Naive thymus-derived CD4-positive, alpha-beta T cell (primary cell): ENCODE measurements at regions of chr1 and their contacts with region 1.

Region 1: DNA sequence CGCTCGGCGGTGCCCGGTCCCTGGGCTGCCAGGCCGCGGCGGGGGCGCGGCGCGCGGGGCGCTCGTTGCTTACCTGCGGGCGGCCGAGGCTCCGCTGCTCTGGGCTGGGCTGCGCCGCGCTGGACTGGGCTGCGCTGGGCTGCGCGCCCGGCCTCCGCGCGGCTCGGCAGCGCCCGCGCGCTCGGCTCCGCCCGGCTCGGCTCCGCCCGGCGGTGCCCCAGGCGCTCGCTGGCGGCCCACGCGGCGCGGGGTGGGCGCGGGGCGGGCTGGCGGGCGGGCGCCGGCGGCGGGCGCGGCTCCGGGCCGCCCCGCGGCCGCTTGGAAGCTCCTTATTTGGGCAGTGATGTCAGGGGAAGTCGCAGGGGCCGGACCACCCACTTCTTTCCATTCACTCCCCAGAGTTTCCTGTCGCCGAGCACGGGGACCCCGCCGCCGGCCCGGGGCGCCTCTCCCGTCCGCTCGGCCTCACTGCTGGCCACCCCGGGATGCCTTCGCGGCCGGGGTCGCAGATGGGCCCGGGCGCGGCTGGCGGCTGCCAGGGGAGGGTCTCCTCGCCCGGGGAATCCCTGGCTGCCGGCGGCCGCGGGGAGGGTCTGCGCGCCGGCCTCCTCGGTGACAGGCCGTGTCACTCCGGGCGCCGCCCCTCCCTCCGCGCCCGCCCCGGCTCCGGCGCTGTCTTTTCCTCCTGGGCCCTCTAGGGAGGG is 177.7 kb upstream of the EDN2 start:
- DNase-seq: peak; percentile 47 to 82 (median 60)
- ATAC-seq: peak; percentile 88
- H3K4me3 ChIP-seq: peak overlapping the region; percentile 60
- H3K4me3 Mint-ChIP-seq: peak overlapping the region in 6 of 10 donors; percentile 13 to 93 (median 70)
- H3K27ac ChIP-seq: peak overlapping the region; percentile 61
- H3K27ac Mint-ChIP-seq: peak overlapping the region in 2 of 9 donors; percentile 56 to 84
- H3K4me1 ChIP-seq: peaks cover 25 to 51% of the 10 kb centered on the region in 2 donors
- H3K4me1 Mint-ChIP-seq: peaks cover 42 to 80% (median 66%) of the 10 kb centered on the region in 7 donors
- H3K27me3 ChIP-seq: no peaks in the 10 kb centered on the region
- H3K27me3 Mint-ChIP-seq: no peaks in the 10 kb centered on the region

Region 2: DNA sequence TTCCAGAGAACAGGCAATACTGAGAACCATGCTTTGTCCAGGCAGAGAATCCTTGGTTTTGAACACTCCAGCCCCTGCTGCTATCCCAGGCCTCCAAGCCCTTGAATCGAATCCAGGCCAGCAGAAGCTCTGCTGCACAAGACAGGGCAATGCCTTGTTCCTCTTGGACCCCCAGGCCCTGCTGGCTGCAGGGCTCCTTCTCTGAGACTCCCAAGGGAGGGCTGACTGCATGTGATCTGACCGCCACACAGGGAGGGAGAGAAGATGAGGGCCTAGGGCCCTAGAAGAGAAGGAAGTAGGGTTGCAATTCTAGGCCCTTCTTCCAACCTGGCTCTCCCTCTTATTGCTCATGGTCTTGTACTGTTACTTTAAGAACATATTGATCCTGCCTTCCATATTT is 17.2 kb before region 1 on chr1:
- CTCF ChIA-PET with region 1: no interaction called
- POLR2A ChIA-PET with region 1: no interaction called
- intact Hi-C with region 1: no loop called
- DNase-seq: no peak
- ATAC-seq: no peak
- H3K4me3 ChIP-seq: no peak overlapping the region
- H3K4me3 Mint-ChIP-seq: no peak overlapping the region
- H3K27ac ChIP-seq: no peak overlapping the region
- H3K27ac Mint-ChIP-seq: no peak overlapping the region
- H3K4me1 ChIP-seq: peaks cover 0 to 5% of the 10 kb centered on the region in 2 donors
- H3K4me1 Mint-ChIP-seq: peaks cover 8 to 36% (median 15%) of the 10 kb centered on the region in 7 donors
- H3K27me3 ChIP-seq: no peaks in the 10 kb centered on the region
- H3K27me3 Mint-ChIP-seq: no peaks in the 10 kb centered on the region

Region 3: DNA sequence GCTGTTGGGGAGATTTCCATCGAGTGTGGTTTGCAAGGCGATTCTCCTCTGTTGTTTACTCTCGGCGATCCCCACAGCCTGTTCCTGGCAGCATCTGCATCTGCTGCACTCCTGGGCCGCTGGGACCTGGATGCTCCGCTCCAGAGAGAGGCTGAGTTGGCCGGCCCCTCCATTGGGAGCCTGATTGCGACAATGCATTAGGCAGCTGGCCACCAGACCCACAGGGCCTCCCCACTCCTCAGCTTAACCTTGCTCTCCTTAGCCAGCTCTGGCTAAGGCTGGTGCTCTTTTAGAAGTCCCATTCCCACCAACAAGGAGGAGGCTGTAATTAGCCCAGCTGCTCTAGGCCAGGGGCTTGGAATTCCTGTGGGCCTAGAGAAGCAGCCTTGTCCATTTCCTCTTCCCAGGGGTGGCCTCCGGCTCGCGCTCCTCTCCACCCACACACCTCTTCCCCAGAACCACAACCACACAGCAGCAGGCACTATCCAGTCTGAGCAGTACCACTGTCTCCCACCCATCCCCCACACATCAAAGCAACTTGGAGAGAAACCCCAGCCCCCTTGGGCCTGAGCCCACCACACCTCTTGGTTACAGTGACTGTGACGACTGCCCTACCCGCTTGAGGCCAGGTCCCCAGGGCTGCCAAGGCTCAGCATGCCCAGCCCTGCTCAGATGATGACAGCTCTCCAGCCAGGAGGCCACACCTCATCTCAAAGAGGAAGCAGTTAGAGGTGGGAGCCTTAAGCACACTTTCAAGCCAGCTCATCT is 16.1 kb after region 1 on chr1:
- CTCF ChIA-PET with region 1: interaction called, 3 read pairs
- POLR2A ChIA-PET with region 1: interaction called, 20 read pairs
- intact Hi-C with region 1: loop called in 1 of 2 experiments (anchors 1 kb)
- DNase-seq: no peak
- ATAC-seq: peak; percentile 46
- H3K4me3 ChIP-seq: no peak overlapping the region
- H3K4me3 Mint-ChIP-seq: peak overlapping the region in 2 of 10 donors; percentile 43 to 76
- H3K27ac ChIP-seq: no peak overlapping the region
- H3K27ac Mint-ChIP-seq: peak overlapping the region in 1 of 9 donors; percentile 90
- H3K4me1 ChIP-seq: peaks cover 40 to 49% of the 10 kb centered on the region in 2 donors
- H3K4me1 Mint-ChIP-seq: peaks cover 30 to 92% (median 58%) of the 10 kb centered on the region in 7 donors
- H3K27me3 ChIP-seq: no peaks in the 10 kb centered on the region
- H3K27me3 Mint-ChIP-seq: no peaks in the 10 kb centered on the region

Region 4: GRCh38 chr1:41683681-41684500 is 21.7 kb after region 1 on chr1:
- CTCF ChIA-PET with region 1: no interaction called
- POLR2A ChIA-PET with region 1: no interaction called
- intact Hi-C with region 1: loop called in 1 of 2 experiments (anchors 2 kb)
- DNase-seq: peak in 1 of 9 donors; percentile 46
- ATAC-seq: peak; percentile 65
- H3K4me3 ChIP-seq: no peak overlapping the region
- H3K4me3 Mint-ChIP-seq: peak overlapping the region in 8 of 10 donors; percentile 9 to 70 (median 24)
- H3K27ac ChIP-seq: no peak overlapping the region
- H3K27ac Mint-ChIP-seq: peak overlapping the region in 2 of 9 donors; percentile 44 to 83
- H3K4me1 ChIP-seq: peaks cover 25 to 53% of the 10 kb centered on the region in 2 donors
- H3K4me1 Mint-ChIP-seq: peaks cover 28 to 95% (median 43%) of the 10 kb centered on the region in 7 donors
- H3K27me3 ChIP-seq: no peaks in the 10 kb centered on the region
- H3K27me3 Mint-ChIP-seq: no peaks in the 10 kb centered on the region

Region 5: GRCh38 chr1:41739061-41739955 is 77.1 kb after region 1 on chr1:
- CTCF ChIA-PET with region 1: no interaction called
- POLR2A ChIA-PET with region 1: no interaction called
- intact Hi-C with region 1: loop called in 1 of 2 experiments (anchors 2 kb)
- DNase-seq: peak; percentile 10 to 83 (median 36)
- ATAC-seq: peak; percentile 87
- H3K4me3 ChIP-seq: peak overlapping the region; percentile 45
- H3K4me3 Mint-ChIP-seq: peak overlapping the region; percentile 68 to 83 (median 76)
- H3K27ac ChIP-seq: no peak overlapping the region
- H3K27ac Mint-ChIP-seq: peak overlapping the region in 6 of 9 donors; percentile 29 to 94 (median 59)
- H3K4me1 ChIP-seq: peaks cover 23 to 31% of the 10 kb centered on the region in 2 donors
- H3K4me1 Mint-ChIP-seq: peaks cover 23 to 83% (median 39%) of the 10 kb centered on the region in 7 donors
- H3K27me3 ChIP-seq: no peaks in the 10 kb centered on the region
- H3K27me3 Mint-ChIP-seq: no peaks in the 10 kb centered on the region

Region 6: DNA sequence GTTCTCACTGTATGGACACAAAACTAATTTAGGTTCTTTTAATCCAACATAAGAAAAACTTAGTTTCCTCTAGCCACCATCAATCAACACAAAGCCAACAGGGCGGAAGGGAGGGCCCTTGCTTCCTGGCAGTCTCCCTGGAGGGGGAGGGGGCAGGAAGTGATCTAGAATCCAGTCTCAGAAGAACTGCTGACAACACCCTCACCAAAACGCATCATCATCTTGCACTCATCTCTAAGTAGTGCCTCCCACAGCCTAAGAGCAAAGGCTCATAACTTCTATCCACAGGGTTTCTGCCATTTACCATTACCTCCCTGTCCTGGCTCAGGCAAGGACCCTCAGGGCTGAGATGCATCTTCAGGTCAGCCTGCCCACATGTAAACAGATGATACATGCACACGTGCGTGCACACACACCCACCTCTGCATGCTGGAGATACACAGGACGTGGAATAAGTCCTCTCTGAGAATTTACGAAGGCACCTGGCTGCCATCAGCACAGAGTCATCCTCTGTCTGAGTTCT is 236.0 kb after region 1 on chr1:
- CTCF ChIA-PET with region 1: no interaction called
- POLR2A ChIA-PET with region 1: no interaction called
- intact Hi-C with region 1: loop called (anchors 5 to 10 kb)
- DNase-seq: peak; percentile 31 to 96 (median 89)
- ATAC-seq: peak; percentile 98
- H3K4me3 ChIP-seq: peak overlapping the region; percentile 40
- H3K4me3 Mint-ChIP-seq: peak overlapping the region; percentile 53 to 84 (median 74)
- H3K27ac ChIP-seq: peak overlapping the region; percentile 65
- H3K27ac Mint-ChIP-seq: peak overlapping the region; percentile 87 to 99 (median 95)
- H3K4me1 ChIP-seq: peaks cover 36 to 74% of the 10 kb centered on the region in 2 donors
- H3K4me1 Mint-ChIP-seq: peaks cover 46 to 90% (median 73%) of the 10 kb centered on the region in 7 donors
- H3K27me3 ChIP-seq: no peaks in the 10 kb centered on the region
- H3K27me3 Mint-ChIP-seq: no peaks in the 10 kb centered on the region

Region 7: GRCh38 chr1:41919764-41920397 is 257.7 kb after region 1 on chr1:
- CTCF ChIA-PET with region 1: no interaction called
- POLR2A ChIA-PET with region 1: no interaction called
- intact Hi-C with region 1: loop called in 1 of 2 experiments (anchors 5 kb)
- DNase-seq: peak; percentile 51 to 82 (median 79)
- ATAC-seq: peak; percentile 89
- H3K4me3 ChIP-seq: peak overlapping the region; percentile 74
- H3K4me3 Mint-ChIP-seq: peak overlapping the region; percentile 90 to 97 (median 95)
- H3K27ac ChIP-seq: peak overlapping the region; percentile 52
- H3K27ac Mint-ChIP-seq: peak overlapping the region; percentile 84 to 99 (median 96)
- H3K4me1 ChIP-seq: peaks cover 48 to 54% of the 10 kb centered on the region in 2 donors
- H3K4me1 Mint-ChIP-seq: peaks cover 37 to 62% (median 56%) of the 10 kb centered on the region in 7 donors
- H3K27me3 ChIP-seq: no peaks in the 10 kb centered on the region
- H3K27me3 Mint-ChIP-seq: peaks cover 0 to 17% (median 0%) of the 10 kb centered on the region in 5 donors